ENCODE measurements at regions of chr16 and their contacts with region 1.

Region 1: GRCh38 chr16:22001591-22001990 is 675 bp upstream of the PDZD9 start:
- DNase-seq: no peak
- ATAC-seq: peak in 2 of 4 donors; percentile 21 to 24
- H3K4me3 ChIP-seq: no peak overlapping the region
- H3K27ac ChIP-seq: no peak overlapping the region
- H3K4me1 ChIP-seq: no peaks in the 10 kb centered on the region
- H3K27me3 ChIP-seq: no peaks in the 10 kb centered on the region
- CTCF ChIP-seq: no peak

Region 2: DNA sequence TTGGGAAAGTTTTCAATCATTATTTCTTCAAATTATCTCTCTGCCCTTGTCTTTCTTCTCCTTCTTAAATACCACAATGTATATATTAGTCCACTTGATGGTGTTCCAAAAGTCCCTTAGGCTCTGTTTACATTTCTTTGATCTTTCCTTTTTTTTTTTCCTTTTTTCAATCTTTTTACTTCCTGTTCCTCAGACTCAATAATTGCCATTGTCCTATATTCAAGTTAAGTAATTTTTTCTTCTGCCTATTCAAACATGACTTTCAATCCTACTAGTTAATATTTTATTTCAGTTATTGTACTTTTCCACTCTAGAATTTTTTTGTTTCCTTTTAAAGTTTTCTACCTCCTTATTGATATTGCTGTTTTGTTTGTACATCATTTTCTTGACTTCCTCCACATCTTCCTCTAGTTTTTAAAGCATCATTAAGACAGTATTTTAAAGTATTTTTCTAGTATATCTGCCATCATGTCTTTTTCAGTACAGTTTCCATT is 64.2 kb before region 1 on chr16:
- intact Hi-C with region 1: no loop called
- DNase-seq: no peak
- ATAC-seq: peak in 3 of 4 donors; percentile 28 to 61 (median 31)
- H3K4me3 ChIP-seq: no peak overlapping the region
- H3K27ac ChIP-seq: no peak overlapping the region
- H3K4me1 ChIP-seq: peaks cover 0 to 13% (median 4%) of the 10 kb centered on the region in 3 donors
- H3K27me3 ChIP-seq: no peaks in the 10 kb centered on the region
- CTCF ChIP-seq: no peak

Region 3: GRCh38 chr16:22132766-22133165 is 131.2 kb after region 1 on chr16:
- intact Hi-C with region 1: no loop called
- DNase-seq: no peak
- ATAC-seq: no peak
- H3K4me3 ChIP-seq: no peak overlapping the region
- H3K27ac ChIP-seq: no peak overlapping the region
- H3K4me1 ChIP-seq: no peaks in the 10 kb centered on the region
- H3K27me3 ChIP-seq: no peaks in the 10 kb centered on the region
- CTCF ChIP-seq: no peak

Region 4: DNA sequence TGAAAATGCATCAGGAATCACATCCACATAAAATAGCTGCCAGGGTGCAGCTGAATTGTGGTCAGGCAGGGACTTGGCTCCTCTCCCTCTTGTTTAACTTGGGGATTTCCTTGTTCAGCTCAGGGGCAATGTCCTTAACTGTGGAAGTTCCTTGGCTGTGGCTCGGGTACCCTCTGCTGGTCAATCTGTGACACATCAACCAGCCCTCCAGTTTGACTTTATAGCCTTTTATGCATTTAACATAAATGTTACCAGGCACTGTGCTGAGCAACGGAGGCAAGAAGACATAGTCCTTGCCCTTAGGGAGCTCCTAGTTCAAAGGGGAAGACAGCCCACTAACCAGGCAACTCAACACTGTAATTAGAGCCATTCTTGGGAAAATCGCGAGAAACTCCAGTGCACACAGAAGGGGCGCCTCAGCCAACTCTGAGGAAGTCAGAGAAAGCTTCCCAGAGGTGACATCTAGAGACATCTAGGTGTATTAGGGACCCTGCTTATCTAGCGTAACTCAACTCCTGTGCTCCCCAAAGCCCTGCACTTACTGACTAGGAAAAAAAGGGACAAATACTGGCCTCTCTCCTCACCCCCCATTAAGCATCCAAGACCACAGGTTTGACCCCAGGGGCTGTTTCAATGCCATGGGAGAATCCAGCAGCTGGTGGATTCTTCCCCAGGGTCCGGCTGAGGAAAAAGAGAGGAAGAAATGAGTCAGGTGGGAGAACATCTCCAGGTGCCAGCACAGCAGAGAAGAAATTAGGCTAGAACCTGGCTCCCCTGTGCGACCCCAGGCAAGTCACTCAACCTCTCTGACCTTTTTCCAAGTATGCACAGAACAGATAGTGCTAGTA is 187.2 kb after region 1 on chr16:
- intact Hi-C with region 1: loop called in 2 of 3 experiments (anchors 5 kb)
- DNase-seq: peak in 5 of 6 donors; percentile 67 to 82 (median 78)
- ATAC-seq: peak in 3 of 4 donors; percentile 24 to 30 (median 28)
- H3K4me3 ChIP-seq: no peak overlapping the region
- H3K27ac ChIP-seq: peak overlapping the region; percentile 49 to 90 (median 86)
- H3K4me1 ChIP-seq: peaks cover 0 to 24% (median 12%) of the 10 kb centered on the region in 3 donors
- H3K27me3 ChIP-seq: no peaks in the 10 kb centered on the region
- CTCF ChIP-seq: peak; percentile 56 to 77 (median 69)

Measured in pancreas (tissue), 10 donors.